Adrenal gland (tissue), 19 donors: ENCODE measurements at regions of chr4 and their contacts with region 1.

Region 1: GRCh38 chr4:158729716-158730559 is 6.7 kb upstream of the PPID start:
- DNase-seq: peak; percentile 60 to 87 (median 73)
- H3K4me3 ChIP-seq: no peak overlapping the region
- H3K27ac ChIP-seq: no peak overlapping the region
- H3K4me1 ChIP-seq: no peaks in the 10 kb centered on the region
- H3K27me3 ChIP-seq: no peaks in the 10 kb centered on the region
- CTCF ChIP-seq: peak; percentile 76 to 98 (median 94)
- POLR2A ChIP-seq: no peak

Region 2: GRCh38 chr4:158768555-158769174 is 38.7 kb after region 1 on chr4 and contains the start of gene FNIP2:
- intact Hi-C with region 1: loop called in 1 of 2 experiments (anchors 2 kb)
- DNase-seq: peak; percentile 78 to 88 (median 87)
- H3K4me3 ChIP-seq: peak within 1 kb of the TSS; percentile 16 to 78 (median 65)
- H3K27ac ChIP-seq: peak within 1 kb of the TSS in 4 of 5 donors; percentile 43 to 93 (median 88)
- H3K4me1 ChIP-seq: peaks cover 0 to 27% of the 10 kb centered on the region in 2 donors
- H3K27me3 ChIP-seq: no peaks in the 10 kb centered on the region
- CTCF ChIP-seq: no peak
- POLR2A ChIP-seq: peak; percentile 84 to 85
- total RNA-seq, gene FNIP2: 20.3 to 39.4 (median 32.7) TPM

Region 3: DNA sequence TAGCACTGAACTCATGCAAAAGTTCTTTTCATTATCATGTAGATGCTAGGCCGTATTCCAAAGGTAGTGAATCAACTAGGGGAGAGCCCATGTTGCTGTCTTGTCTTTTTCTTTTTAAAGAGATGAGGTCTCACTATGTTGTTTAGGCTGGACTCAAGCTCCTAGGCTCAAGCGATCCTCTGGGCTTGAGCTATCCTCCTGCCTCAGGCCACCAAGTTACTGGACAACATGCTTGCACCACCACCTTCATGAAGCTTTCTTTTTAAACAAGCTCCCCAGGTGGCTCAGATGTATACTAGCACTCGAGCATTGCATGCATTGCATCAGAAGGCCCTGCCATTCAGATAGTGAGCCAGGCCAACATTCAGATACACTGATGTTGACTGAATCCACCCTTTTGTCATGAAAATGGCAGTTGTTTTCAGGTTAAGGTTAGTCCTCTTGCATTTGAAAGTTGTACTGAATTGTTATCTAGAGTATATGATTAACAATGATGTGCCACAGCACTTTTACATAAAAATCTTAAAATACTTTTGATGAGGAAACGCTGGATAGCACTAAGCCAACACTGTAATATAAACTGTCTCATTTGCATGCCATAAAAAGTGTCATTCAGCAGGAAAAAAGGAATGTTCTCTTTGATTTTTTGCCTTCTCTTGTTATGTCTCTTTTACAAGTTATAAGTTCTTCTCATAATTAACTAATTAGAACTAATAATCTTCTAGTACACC is 115.5 kb after region 1 on chr4:
- intact Hi-C with region 1: loop called (anchors 5 kb)
- DNase-seq: no peak
- H3K4me3 ChIP-seq: no peak overlapping the region
- H3K27ac ChIP-seq: no peak overlapping the region
- H3K4me1 ChIP-seq: peaks cover 0 to 5% of the 10 kb centered on the region in 2 donors
- H3K27me3 ChIP-seq: no peaks in the 10 kb centered on the region
- CTCF ChIP-seq: no peak
- POLR2A ChIP-seq: no peak

Region 4: DNA sequence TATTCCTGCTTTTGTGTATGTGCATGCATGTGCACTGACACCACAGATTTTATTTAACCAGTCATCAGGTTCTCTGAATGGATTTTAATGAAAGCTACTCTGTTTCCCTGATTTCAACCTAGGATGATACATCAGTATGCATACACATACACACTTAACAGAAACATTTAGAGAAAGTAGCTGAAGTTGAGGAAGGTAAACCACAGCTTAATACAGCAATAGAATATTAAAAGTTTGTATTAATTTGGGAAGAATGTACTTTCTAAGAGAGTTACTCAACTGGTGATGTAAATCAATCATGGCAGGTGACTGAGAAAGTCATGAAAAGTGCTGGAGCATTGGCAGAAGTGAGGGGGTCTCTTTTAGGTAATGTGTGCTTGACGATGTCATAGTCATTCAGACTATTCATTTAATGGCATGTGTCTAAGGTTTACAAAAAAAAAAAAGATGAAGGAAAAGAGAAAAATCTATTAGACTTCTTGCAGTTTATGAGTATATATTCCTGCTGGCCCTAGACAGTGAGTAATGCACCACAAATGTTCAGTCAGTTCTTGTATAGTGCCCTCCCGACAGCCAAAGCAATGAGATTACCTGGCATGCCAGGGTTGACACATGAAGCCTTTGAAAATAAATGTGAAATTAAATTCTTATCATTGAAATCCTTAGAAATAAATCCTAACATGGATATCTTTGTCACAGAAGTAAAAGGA is 560.5 kb after region 1 on chr4:
- intact Hi-C with region 1: no loop called
- DNase-seq: no peak
- H3K4me3 ChIP-seq: no peak overlapping the region
- H3K27ac ChIP-seq: no peak overlapping the region
- H3K4me1 ChIP-seq: peaks cover 0 to 14% of the 10 kb centered on the region in 2 donors
- H3K27me3 ChIP-seq: no peaks in the 10 kb centered on the region
- CTCF ChIP-seq: no peak
- POLR2A ChIP-seq: no peak